Activated T-helper 1 cell treated with anti-CD3 and anti-CD28 coated beads, Interleukin-12 subunit alpha, Interleukin-12 subunit beta, Interleukin-2, Interleukin-4 antibody, amounts not matched to agents 30 ng/mL and 10 ng/mL and 1 ng/mL, durations not matched to agents 14 hours and 24 hours and 36 hours (primary cell): ENCODE measurements at regions of chr3 and their contacts with region 1.

Region 1: GRCh38 chr3:18369551-18370185 is 55.5 kb downstream of the SATB1 start:
- DNase-seq: no peak
- H3K4me3 Mint-ChIP-seq: no peak overlapping the region
- H3K27ac Mint-ChIP-seq: peak overlapping the region; percentile 85
- H3K4me1 Mint-ChIP-seq: peaks cover 87% of the 10 kb centered on the region
- H3K27me3 Mint-ChIP-seq: no peaks in the 10 kb centered on the region

Region 2: DNA sequence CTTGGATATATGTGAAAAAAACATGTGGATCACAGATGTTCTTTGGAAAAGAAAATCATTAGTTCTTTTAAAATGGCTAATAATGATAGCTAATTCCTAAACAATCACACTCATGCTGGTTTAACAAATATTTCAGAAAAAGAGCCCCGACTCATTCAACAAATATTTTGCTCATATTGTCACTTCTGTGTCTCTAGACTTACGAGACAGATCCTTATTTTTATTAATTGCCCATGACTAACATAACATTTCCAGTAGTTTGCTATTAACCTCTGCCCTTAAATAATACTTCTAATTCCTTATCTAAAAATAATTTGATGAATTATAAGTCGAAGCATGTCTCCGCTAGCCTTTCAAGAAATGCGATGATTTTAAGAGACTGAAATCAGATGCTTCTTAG is 15.0 kb before region 1 on chr3:
- intact Hi-C with region 1: loop called (anchors 2 kb)
- DNase-seq: no peak
- H3K4me3 Mint-ChIP-seq: no peak overlapping the region
- H3K27ac Mint-ChIP-seq: no peak overlapping the region
- H3K4me1 Mint-ChIP-seq: peaks cover 50% of the 10 kb centered on the region
- H3K27me3 Mint-ChIP-seq: no peaks in the 10 kb centered on the region